ENCODE measurements at regions of chr10 and their contacts with region 1.

Region 1: GRCh38 chr10:37434091-37434490 is 308.7 kb downstream of the ANKRD30A start:
- DNase-seq: no peak
- ATAC-seq: no peak
- H3K4me3 ChIP-seq: no peak overlapping the region
- H3K27ac ChIP-seq: no peak overlapping the region
- H3K4me1 ChIP-seq: no peaks in the 10 kb centered on the region
- H3K27me3 ChIP-seq: no peaks in the 10 kb centered on the region
- CTCF ChIP-seq: peak; percentile 25

Region 2: DNA sequence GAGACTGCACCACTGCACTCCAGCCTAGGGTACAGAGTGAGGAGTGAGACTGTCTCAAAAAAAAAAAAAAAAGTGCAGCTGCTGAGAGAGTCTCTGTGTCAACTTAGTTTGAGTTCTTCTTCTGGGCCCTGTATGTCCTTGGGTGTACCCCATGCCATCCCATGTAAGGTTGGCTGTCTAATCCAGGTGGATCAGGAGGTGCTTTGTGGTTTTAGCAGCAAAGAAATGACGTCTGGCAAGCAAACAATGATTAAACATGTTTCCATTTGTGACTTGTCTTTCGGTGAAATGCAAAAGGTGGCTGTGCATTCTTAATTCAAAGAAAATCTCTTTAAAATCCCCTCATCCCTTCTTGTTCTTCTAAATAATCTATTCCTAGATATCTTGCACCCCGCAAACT is 52.8 kb before region 1 on chr10:
- intact Hi-C with region 1: no loop called
- DNase-seq: no peak
- ATAC-seq: no peak
- H3K4me3 ChIP-seq: no peak overlapping the region
- H3K27ac ChIP-seq: no peak overlapping the region
- H3K4me1 ChIP-seq: no peaks in the 10 kb centered on the region
- H3K27me3 ChIP-seq: no peaks in the 10 kb centered on the region
- CTCF ChIP-seq: no peak

Region 3: DNA sequence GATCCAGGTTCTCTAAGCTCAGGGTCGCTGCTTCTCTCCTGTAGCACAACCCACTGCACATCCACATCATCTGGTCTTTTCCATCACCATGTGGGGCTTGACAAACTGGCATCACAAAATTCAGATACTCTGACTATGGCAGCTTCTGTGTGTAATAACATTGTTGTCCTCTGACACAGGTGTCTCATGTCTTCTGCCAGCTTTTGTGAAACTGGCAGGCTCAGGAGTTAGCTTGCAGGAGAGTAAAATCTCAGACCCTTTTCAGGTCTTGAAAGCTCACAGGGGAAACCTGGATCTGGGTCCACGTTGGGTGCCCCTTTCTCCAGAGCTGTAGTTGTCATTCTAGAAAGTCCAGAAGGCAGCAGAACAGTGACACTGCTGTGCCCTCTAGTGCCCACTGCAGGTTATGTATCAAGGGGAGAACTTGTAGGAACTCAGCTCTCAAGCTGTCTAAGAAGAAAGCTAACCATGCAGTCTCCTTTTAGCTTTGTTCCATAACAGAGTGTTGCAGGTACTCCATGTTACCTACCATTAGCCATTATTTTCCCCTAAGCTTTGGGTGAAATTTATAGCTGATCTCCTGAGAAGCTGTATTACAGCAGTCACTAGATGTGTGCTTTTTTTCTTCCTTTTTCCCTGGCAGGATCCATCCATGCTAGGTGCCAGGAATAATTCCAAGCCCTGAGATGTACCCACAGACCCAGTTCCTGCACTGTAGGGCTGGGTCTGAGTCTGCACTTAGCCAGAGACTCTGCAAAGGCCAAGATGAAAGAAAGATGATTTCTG is 320.6 kb after region 1 on chr10:
- intact Hi-C with region 1: loop called in 1 of 2 experiments (anchors 10 kb)
- DNase-seq: no peak
- ATAC-seq: no peak
- H3K4me3 ChIP-seq: no peak overlapping the region
- H3K27ac ChIP-seq: no peak overlapping the region
- H3K4me1 ChIP-seq: no peaks in the 10 kb centered on the region
- H3K27me3 ChIP-seq: no peaks in the 10 kb centered on the region
- CTCF ChIP-seq: peak; percentile 37

Measured in psoas muscle (tissue), 8 donors.